Panc1 (cell line): ENCODE measurements at regions of chr9 and their contacts with region 1.

Region 1: DNA sequence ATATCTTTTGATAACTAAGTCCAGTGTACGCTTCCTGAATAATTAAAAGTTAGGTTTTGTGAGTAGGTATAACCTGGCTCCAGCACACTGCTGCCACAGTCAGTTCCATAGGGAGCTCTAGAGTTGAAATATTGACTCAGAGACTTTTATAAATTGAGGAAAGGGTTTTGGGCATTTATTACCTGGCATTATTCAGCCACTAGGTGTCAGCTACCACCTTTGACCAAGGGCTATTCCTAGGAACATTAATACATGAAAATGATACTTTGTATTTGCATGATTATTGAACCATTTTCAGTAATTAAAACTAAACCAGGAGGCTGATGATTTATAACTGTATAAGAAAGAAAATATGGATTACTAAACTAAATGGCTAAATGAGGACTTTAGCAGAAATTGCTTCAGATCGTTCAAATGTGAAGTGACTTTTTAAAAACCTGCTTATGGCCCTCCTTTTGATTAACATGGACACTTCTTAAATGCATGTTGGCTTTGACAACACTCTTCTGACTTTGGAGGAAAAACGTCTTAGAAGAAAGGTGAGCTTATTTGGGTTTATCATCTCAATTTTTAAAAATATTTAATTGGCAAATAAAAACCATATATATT is 83.0 kb downstream of the SMC2 start:
- DNase-seq: no peak
- ATAC-seq: no peak
- H3K4me3 ChIP-seq: no peak overlapping the region
- H3K27ac ChIP-seq: no peak overlapping the region
- H3K4me1 ChIP-seq: no peaks in the 10 kb centered on the region
- H3K27me3 ChIP-seq: no peaks in the 10 kb centered on the region
- CTCF ChIP-seq: peak; percentile 48; the same call in 1 of the 2 replicates

Region 2: GRCh38 chr9:104032556-104032955 is 144.6 kb before region 1 on chr9:
- CTCF ChIA-PET with region 1: no interaction called
- POLR2A ChIA-PET with region 1: no interaction called
- in situ Hi-C with region 1: no loop called
- intact Hi-C with region 1: no loop called
- DNase-seq: no peak
- ATAC-seq: no peak
- H3K4me3 ChIP-seq: no peak overlapping the region
- H3K27ac ChIP-seq: no peak overlapping the region
- H3K4me1 ChIP-seq: no peaks in the 10 kb centered on the region
- H3K27me3 ChIP-seq: no peaks in the 10 kb centered on the region
- CTCF ChIP-seq: no peak

Region 3: DNA sequence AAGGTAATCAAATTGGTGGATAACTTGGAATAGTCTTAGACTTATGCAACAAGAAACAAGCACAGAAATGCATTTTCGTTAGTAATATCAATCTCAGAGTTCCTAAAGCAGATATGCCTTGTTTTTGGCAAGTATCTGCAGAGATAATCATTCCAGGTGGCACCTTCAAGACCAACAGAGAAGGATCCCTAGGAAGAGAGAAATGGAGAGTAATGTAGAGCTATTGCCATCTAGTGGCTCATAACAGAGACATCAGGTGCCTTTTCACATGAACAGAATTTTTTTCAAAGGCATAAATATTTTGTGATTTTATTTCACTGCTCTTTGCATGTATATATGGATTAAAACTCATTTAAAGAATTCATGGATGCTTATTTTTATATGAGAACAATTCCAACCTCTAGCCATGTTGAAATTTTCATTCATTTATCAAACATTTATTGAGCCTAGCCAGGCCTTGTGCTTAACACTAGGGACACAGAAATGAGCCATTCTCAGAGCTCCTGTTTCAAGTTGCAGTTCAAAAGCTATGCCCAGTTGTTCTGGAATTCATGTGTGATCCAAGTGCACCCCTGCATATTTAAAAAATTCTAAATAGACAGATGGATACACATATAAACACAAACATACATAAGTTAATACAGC is 209.4 kb after region 1 on chr9:
- CTCF ChIA-PET with region 1: no interaction called
- POLR2A ChIA-PET with region 1: no interaction called
- in situ Hi-C with region 1: no loop called
- intact Hi-C with region 1: loop called (anchors 2 kb)
- DNase-seq: peak; percentile 8
- ATAC-seq: no peak
- H3K4me3 ChIP-seq: no peak overlapping the region
- H3K27ac ChIP-seq: no peak overlapping the region
- H3K4me1 ChIP-seq: no peaks in the 10 kb centered on the region
- H3K27me3 ChIP-seq: no peaks in the 10 kb centered on the region
- CTCF ChIP-seq: peak; percentile 58; the same call in 1 of the 2 replicates